ENCODE measurements at regions of chr6 and their contacts with region 1.

Region 1: GRCh38 chr6:10256113-10256690 is 158.7 kb downstream of the TFAP2A start:
- DNase-seq: peak in 1 of 2 experiments; percentile 55
- H3K4me3 ChIP-seq: no peak overlapping the region
- H3K27ac ChIP-seq: no peak overlapping the region
- H3K4me1 ChIP-seq: no peaks in the 10 kb centered on the region
- H3K27me3 ChIP-seq: peaks cover 0 to 1% (median 0%) of the 10 kb centered on the region in 4 experiments; a peak in 1 of 7 replicates
- CTCF ChIP-seq: peak in 2 of 3 experiments; percentile 35 to 47; a peak in 2 of 4 replicates
- EP300 ChIP-seq: no peak
- POLR2A ChIP-seq: no peak
- RAD21 ChIP-seq: peak; percentile 34 to 48

Region 2: GRCh38 chr6:10000541-10000940 is 255.7 kb before region 1 on chr6:
- CTCF ChIA-PET with region 1: no interaction called
- POLR2A ChIA-PET with region 1: no interaction called
- DNase-seq: no peak
- H3K4me3 ChIP-seq: no peak overlapping the region
- H3K27ac ChIP-seq: no peak overlapping the region
- H3K4me1 ChIP-seq: no peaks in the 10 kb centered on the region
- H3K27me3 ChIP-seq: no peaks in the 10 kb centered on the region
- CTCF ChIP-seq: no peak
- EP300 ChIP-seq: no peak
- POLR2A ChIP-seq: no peak
- RAD21 ChIP-seq: no peak

Region 3: GRCh38 chr6:10269814-10270472 is 13.7 kb after region 1 on chr6:
- CTCF ChIA-PET with region 1: interaction called, 20 read pairs
- POLR2A ChIA-PET with region 1: no interaction called
- DNase-seq: no peak
- H3K4me3 ChIP-seq: no peak overlapping the region
- H3K27ac ChIP-seq: no peak overlapping the region
- H3K4me1 ChIP-seq: peaks cover 9 to 27% (median 16%) of the 10 kb centered on the region in 4 experiments
- H3K27me3 ChIP-seq: no peaks in the 10 kb centered on the region
- CTCF ChIP-seq: no peak
- EP300 ChIP-seq: no peak
- POLR2A ChIP-seq: no peak
- RAD21 ChIP-seq: no peak

Region 4: GRCh38 chr6:10302566-10303235 is 46.5 kb after region 1 on chr6:
- CTCF ChIA-PET with region 1: interaction called, 10 read pairs
- POLR2A ChIA-PET with region 1: no interaction called
- DNase-seq: no peak
- H3K4me3 ChIP-seq: no peak overlapping the region
- H3K27ac ChIP-seq: no peak overlapping the region
- H3K4me1 ChIP-seq: peaks cover 0 to 4% (median 3%) of the 10 kb centered on the region in 4 experiments; a peak in 5 of 7 replicates
- H3K27me3 ChIP-seq: no peaks in the 10 kb centered on the region
- CTCF ChIP-seq: no peak
- EP300 ChIP-seq: no peak
- POLR2A ChIP-seq: no peak
- RAD21 ChIP-seq: no peak